IMR-90 (cell line): ENCODE measurements at regions of chr2 and their contacts with region 1.

Region 1: DNA sequence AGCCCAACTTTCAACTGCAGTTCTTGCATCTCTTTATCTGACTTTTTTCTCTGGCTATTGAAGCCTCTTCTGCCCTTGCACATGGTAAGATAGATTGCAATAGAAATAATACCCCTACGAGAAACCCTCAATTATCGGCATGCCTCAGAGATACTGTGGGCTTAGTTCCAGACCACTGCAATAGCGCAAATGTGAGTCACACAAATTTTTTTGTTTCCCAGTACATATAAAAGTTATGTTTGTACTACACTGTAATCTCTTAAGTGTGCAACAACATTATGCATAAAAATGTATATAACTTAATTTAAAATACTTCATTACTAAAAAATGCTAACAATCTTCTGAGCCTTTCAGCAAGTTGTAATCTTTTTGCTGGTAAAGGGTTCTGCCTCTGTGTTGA is 124.7 kb downstream of the PDE1A start:
- DNase-seq: peak; percentile 90
- ATAC-seq: peak; percentile 79
- H3K4me3 ChIP-seq: no peak overlapping the region
- H3K27ac ChIP-seq: peak overlapping the region; percentile 90; the same call in 1 of the 2 replicates
- H3K4me1 ChIP-seq: peaks cover 2% of the 10 kb centered on the region; the same call in 1 of the 2 replicates
- H3K27me3 ChIP-seq: no peaks in the 10 kb centered on the region
- CTCF ChIP-seq: no peak
- POLR2A ChIP-seq: no peak
- RAD21 ChIP-seq: no peak

Region 2: GRCh38 chr2:182148344-182148743 is 153.8 kb before region 1 on chr2:
- CTCF ChIA-PET with region 1: no interaction called
- POLR2A ChIA-PET with region 1: no interaction called
- dilution Hi-C with region 1: no loop called
- in situ Hi-C with region 1: no loop called
- intact Hi-C with region 1: no loop called
- DNase-seq: no peak
- ATAC-seq: no peak
- H3K4me3 ChIP-seq: no peak overlapping the region
- H3K27ac ChIP-seq: no peak overlapping the region
- H3K4me1 ChIP-seq: no peaks in the 10 kb centered on the region
- H3K27me3 ChIP-seq: no peaks in the 10 kb centered on the region
- CTCF ChIP-seq: no peak
- POLR2A ChIP-seq: no peak
- RAD21 ChIP-seq: no peak

Region 3: GRCh38 chr2:182655750-182656149 is 353.6 kb after region 1 on chr2:
- CTCF ChIA-PET with region 1: no interaction called
- POLR2A ChIA-PET with region 1: no interaction called
- dilution Hi-C with region 1: no loop called
- in situ Hi-C with region 1: no loop called
- intact Hi-C with region 1: no loop called
- DNase-seq: no peak
- ATAC-seq: no peak
- H3K4me3 ChIP-seq: no peak overlapping the region
- H3K27ac ChIP-seq: no peak overlapping the region
- H3K4me1 ChIP-seq: no peaks in the 10 kb centered on the region
- H3K27me3 ChIP-seq: no peaks in the 10 kb centered on the region
- CTCF ChIP-seq: no peak
- POLR2A ChIP-seq: no peak
- RAD21 ChIP-seq: no peak

Region 4: DNA sequence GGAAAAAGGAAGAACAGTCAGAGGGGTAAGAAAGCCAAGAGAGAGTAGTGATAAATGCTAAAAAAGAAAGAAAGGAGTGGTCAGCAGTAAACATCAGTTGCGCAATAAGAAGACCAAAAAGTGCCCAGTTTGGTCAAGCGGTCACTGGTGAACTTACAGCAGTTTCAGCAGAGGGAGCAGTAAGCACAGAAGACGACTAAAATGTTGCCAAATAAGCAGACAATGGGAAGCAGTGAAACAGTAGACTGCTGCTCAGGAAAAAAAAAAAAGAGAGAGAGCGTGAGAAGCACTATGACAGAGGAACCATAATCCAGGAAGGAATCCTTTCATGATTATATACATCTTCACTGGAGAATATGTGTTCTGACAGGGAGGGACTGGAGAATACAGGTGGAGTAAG is 459.7 kb after region 1 on chr2:
- CTCF ChIA-PET with region 1: no interaction called
- POLR2A ChIA-PET with region 1: no interaction called
- dilution Hi-C with region 1: no loop called
- in situ Hi-C with region 1: no loop called
- intact Hi-C with region 1: no loop called
- DNase-seq: peak; percentile 37
- ATAC-seq: peak; percentile 42
- H3K4me3 ChIP-seq: no peak overlapping the region
- H3K27ac ChIP-seq: no peak overlapping the region
- H3K4me1 ChIP-seq: no peaks in the 10 kb centered on the region
- H3K27me3 ChIP-seq: no peaks in the 10 kb centered on the region
- CTCF ChIP-seq: no peak
- POLR2A ChIP-seq: no peak
- RAD21 ChIP-seq: no peak

Region 5: DNA sequence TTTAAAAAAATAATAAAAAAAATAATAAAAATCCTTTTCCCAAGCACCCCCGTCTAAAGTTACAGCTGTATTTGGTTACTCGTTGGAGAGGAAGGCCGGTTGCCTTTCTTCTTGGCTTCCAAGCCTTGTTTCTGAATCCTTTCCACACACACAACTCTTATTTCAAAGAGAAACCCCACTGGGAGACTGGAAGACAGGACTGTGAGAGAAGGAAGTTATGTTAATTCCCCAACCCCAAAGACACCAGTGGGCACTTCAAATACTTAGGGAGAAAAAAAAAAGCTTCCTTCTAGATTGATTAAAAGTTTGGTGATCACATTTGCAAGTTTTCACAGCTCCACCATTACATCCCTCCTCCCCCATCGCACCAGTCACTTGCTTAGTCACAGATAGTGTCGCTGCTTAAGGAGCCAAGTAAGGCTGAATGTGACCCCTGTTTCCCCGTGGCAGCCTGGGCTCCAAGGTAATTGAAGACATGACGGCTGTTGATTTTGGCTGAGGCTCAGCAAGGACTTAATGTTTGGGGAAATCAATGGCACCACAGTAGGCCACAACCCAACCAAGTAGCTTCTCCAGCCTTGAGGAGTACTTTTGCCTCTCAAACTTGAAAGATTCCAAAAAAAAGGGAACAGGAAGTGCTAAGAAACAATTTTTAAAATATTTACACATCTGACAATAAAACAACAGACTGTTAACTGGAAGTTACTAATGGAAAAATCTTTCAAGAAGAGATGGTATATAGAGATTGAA is 605.1 kb after region 1 on chr2:
- CTCF ChIA-PET with region 1: no interaction called
- POLR2A ChIA-PET with region 1: interaction called, 11 read pairs
- dilution Hi-C with region 1: no loop called
- in situ Hi-C with region 1: no loop called
- intact Hi-C with region 1: no loop called
- DNase-seq: peak; percentile 11
- ATAC-seq: no peak
- H3K4me3 ChIP-seq: no peak overlapping the region
- H3K27ac ChIP-seq: no peak overlapping the region
- H3K4me1 ChIP-seq: peaks cover 2% of the 10 kb centered on the region; the same call in 1 of the 2 replicates
- H3K27me3 ChIP-seq: no peaks in the 10 kb centered on the region
- CTCF ChIP-seq: no peak
- POLR2A ChIP-seq: no peak
- RAD21 ChIP-seq: no peak